ENCODE measurements at regions of chr6 and their contacts with region 1.

Region 1: DNA sequence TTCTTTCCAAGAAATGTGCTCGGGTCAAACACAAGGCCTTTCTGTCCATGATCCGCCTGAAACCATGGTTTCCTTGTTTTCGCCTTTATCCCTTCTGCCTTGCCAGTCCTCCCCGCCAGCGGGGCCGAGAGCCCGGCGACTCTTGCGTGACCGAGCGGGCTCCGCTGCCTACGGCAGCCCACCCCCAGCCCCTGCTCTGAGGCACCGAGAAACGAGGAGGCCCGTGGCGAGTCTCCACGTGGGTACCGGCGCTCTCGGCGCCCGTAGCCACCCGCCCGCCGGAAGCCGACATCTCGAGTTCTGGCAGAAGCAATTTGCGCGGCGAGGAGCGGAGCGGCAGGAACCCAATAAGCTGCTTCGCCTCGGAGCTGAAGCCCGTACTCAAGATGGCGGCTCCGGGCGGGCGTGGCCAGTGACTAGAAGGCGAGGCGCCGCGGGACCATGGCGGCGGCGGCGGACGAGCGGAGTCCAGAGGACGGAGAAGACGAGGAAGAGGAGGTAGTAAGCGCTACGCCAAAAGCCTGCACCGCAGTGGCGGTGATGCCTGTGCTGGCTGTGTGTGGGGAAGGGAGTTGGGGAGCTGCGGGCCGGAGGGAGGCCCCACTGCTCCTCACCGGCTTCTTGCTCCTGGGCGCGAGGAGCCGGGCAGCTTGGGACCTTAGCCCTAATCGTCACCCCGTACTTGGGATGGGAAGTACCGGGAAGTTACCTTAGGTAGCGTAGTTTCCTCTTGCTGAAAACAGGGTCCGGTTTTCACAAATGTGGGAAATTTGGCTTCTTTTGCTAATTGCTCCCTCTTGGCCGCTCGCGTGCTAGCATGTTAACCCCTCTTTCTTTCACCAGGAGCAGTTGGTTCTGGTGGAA is at the start of gene GTF3C6:
- DNase-seq: peak; percentile 97
- ATAC-seq: peak; percentile 99 to 100
- total RNA-seq, gene GTF3C6: 80.5 to 86.5 TPM

Region 2: GRCh38 chr6:110815217-110816109 is 143.1 kb before region 1 on chr6 and contains the start of gene CDK19:
- intact Hi-C with region 1: loop called in 1 of 2 experiments (anchors 10 kb)
- DNase-seq: peak; percentile 99
- ATAC-seq: peak; percentile 96 to 97
- total RNA-seq, gene CDK19: 7.4 to 9.6 TPM

Region 3: GRCh38 chr6:110873981-110874879 is 84.3 kb before region 1 on chr6 and contains the start of gene AMD1:
- intact Hi-C with region 1: loop called in 1 of 2 experiments (anchors 10 kb)
- DNase-seq: peak; percentile 98
- ATAC-seq: peak; percentile 86 to 91
- total RNA-seq, gene AMD1: 38.6 to 62.4 TPM